ENCODE measurements at regions of chr19 and their contacts with region 1.

Region 1: GRCh38 chr19:15292847-15293582 is 39.3 kb downstream of the BRD4 start:
- DNase-seq: no peak
- H3K4me3 ChIP-seq: no peak overlapping the region
- H3K27ac ChIP-seq: peak overlapping the region; percentile 52
- H3K4me1 ChIP-seq: peaks cover 58% of the 10 kb centered on the region
- H3K27me3 ChIP-seq: no peaks in the 10 kb centered on the region
- CTCF ChIP-seq: no peak

Region 2: GRCh38 chr19:15324791-15325519 is 31.9 kb after region 1 on chr19:
- dilution Hi-C with region 1: loop called (anchors 5 kb)
- DNase-seq: no peak
- H3K4me3 ChIP-seq: no peak overlapping the region
- H3K27ac ChIP-seq: peak overlapping the region; percentile 70
- H3K4me1 ChIP-seq: peaks cover 61% of the 10 kb centered on the region
- H3K27me3 ChIP-seq: no peaks in the 10 kb centered on the region
- CTCF ChIP-seq: peak in 2 of 3 experiments; percentile 7 to 12

Measured in keratinocyte (primary cell).